Endothelial cell of umbilical vein (primary cell): ENCODE measurements at regions of chr3 and their contacts with region 1.

Region 1: GRCh38 chr3:152574461-152575079 is 260.4 kb upstream of the P2RY1 start:
- DNase-seq: peak; percentile 78
- H3K4me3 ChIP-seq: no peak overlapping the region
- H3K27ac ChIP-seq: no peak overlapping the region
- H3K4me1 ChIP-seq: no peaks in the 10 kb centered on the region
- H3K27me3 ChIP-seq: no peaks in the 10 kb centered on the region
- CTCF ChIP-seq: peak; percentile 41 to 45
- POLR2A ChIP-seq: no peak

Region 2: GRCh38 chr3:151468284-151468917 is 1106.2 kb before region 1 on chr3:
- CTCF ChIA-PET with region 1: no interaction called
- POLR2A ChIA-PET with region 1: no interaction called
- dilution Hi-C with region 1: no loop called
- intact Hi-C with region 1: loop called (anchors 10 kb)
- DNase-seq: peak; percentile 62
- H3K4me3 ChIP-seq: no peak overlapping the region
- H3K27ac ChIP-seq: no peak overlapping the region
- H3K4me1 ChIP-seq: no peaks in the 10 kb centered on the region
- H3K27me3 ChIP-seq: peaks cover 0 to 2% of the 10 kb centered on the region in 2 experiments
- CTCF ChIP-seq: peak; percentile 83 to 86
- POLR2A ChIP-seq: no peak

Region 3: DNA sequence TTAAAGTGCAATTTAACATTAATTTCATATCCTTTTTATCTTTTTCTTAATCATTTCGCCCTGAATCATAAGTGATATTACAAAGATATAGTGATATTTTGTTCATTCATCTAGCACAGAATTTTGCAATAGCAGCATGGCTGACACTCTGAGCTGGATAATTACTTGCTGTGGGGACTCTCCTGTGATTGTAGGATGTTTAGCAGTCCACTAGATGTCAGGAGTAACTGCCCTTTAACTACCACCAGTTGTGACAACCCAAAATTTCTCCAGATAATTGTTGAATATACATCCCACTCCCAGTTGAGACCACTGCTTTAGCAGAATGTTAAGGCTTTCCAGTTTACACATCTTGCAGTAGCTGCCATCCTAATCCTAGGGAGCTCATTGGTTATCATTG is 502.6 kb before region 1 on chr3:
- CTCF ChIA-PET with region 1: interaction called, 6 read pairs
- POLR2A ChIA-PET with region 1: no interaction called
- dilution Hi-C with region 1: no loop called
- intact Hi-C with region 1: loop called (anchors 5 kb)
- DNase-seq: peak; percentile 50
- H3K4me3 ChIP-seq: no peak overlapping the region
- H3K27ac ChIP-seq: no peak overlapping the region
- H3K4me1 ChIP-seq: peaks cover 4% of the 10 kb centered on the region
- H3K27me3 ChIP-seq: no peaks in the 10 kb centered on the region
- CTCF ChIP-seq: peak; percentile 37 to 40
- POLR2A ChIP-seq: no peak

Region 4: GRCh38 chr3:152471814-152472671 is 102.5 kb before region 1 on chr3:
- CTCF ChIA-PET with region 1: interaction called, 63 read pairs
- POLR2A ChIA-PET with region 1: no interaction called
- dilution Hi-C with region 1: no loop called
- intact Hi-C with region 1: loop called (anchors 1 kb)
- DNase-seq: peak; percentile 76
- H3K4me3 ChIP-seq: no peak overlapping the region
- H3K27ac ChIP-seq: peak overlapping the region; percentile 13
- H3K4me1 ChIP-seq: no peaks in the 10 kb centered on the region
- H3K27me3 ChIP-seq: no peaks in the 10 kb centered on the region
- CTCF ChIP-seq: peak; percentile 54 to 63
- POLR2A ChIP-seq: no peak

Region 5: GRCh38 chr3:152524198-152525140 is 50.1 kb before region 1 on chr3:
- CTCF ChIA-PET with region 1: interaction called, 54 read pairs
- POLR2A ChIA-PET with region 1: no interaction called
- dilution Hi-C with region 1: no loop called
- intact Hi-C with region 1: no loop called
- DNase-seq: peak; percentile 73
- H3K4me3 ChIP-seq: no peak overlapping the region
- H3K27ac ChIP-seq: no peak overlapping the region
- H3K4me1 ChIP-seq: no peaks in the 10 kb centered on the region
- H3K27me3 ChIP-seq: no peaks in the 10 kb centered on the region
- CTCF ChIP-seq: peak; percentile 48 to 54
- POLR2A ChIP-seq: no peak